ENCODE measurements at regions of chr17 and their contacts with region 1.

Region 1: GRCh38 chr17:32486111-32486700 is 587 bp upstream of the CDK5R1 start:
- DNase-seq: no peak
- ATAC-seq: peak; percentile 81
- H3K4me3 Mint-ChIP-seq: peak overlapping the region; percentile 70
- H3K27ac Mint-ChIP-seq: peak overlapping the region; percentile 46
- H3K4me1 Mint-ChIP-seq: peaks cover 47% of the 10 kb centered on the region
- H3K27me3 Mint-ChIP-seq: no peaks in the 10 kb centered on the region
- CTCF ChIP-seq: no peak

Region 2: DNA sequence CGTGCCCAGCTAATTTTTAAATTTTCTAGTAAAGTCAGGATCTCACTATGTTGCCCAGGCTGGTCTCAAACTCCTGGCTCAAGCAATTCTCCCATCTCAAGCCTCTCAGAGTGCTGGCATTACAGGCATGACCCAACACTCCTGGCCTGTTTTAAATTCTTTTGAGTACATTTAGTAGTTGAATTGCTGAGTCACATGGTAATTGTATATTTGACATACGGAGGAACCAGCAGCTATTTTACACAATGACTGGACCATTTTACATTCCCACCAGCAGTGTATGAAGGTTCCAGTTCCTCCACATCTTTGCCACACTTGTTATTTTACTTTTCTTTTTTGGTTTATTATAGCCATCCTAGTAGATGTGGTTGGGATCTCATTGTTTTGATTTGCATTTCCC is 300.3 kb before region 1 on chr17:
- CTCF ChIA-PET with region 1: no interaction called
- POLR2A ChIA-PET with region 1: no interaction called
- intact Hi-C with region 1: no loop called
- DNase-seq: no peak
- ATAC-seq: no peak
- H3K4me3 Mint-ChIP-seq: no peak overlapping the region
- H3K27ac Mint-ChIP-seq: no peak overlapping the region
- H3K4me1 Mint-ChIP-seq: no peaks in the 10 kb centered on the region
- H3K27me3 Mint-ChIP-seq: no peaks in the 10 kb centered on the region
- CTCF ChIP-seq: no peak

Region 3: GRCh38 chr17:32265192-32265923 is 220.8 kb before region 1 on chr17 and contains the start of gene RHBDL3:
- CTCF ChIA-PET with region 1: no interaction called
- POLR2A ChIA-PET with region 1: no interaction called
- intact Hi-C with region 1: no loop called
- DNase-seq: peak; percentile 29
- ATAC-seq: peak; percentile 51
- H3K4me3 Mint-ChIP-seq: peak within 1 kb of the TSS; percentile 80
- H3K27ac Mint-ChIP-seq: no peak within 1 kb of the TSS
- H3K4me1 Mint-ChIP-seq: peaks cover 17% of the 10 kb centered on the region
- H3K27me3 Mint-ChIP-seq: peaks cover 54% of the 10 kb centered on the region
- CTCF ChIP-seq: no peak
- total RNA-seq, gene RHBDL3: 0.10 and 0.20 TPM in 2 replicates

Region 4: DNA sequence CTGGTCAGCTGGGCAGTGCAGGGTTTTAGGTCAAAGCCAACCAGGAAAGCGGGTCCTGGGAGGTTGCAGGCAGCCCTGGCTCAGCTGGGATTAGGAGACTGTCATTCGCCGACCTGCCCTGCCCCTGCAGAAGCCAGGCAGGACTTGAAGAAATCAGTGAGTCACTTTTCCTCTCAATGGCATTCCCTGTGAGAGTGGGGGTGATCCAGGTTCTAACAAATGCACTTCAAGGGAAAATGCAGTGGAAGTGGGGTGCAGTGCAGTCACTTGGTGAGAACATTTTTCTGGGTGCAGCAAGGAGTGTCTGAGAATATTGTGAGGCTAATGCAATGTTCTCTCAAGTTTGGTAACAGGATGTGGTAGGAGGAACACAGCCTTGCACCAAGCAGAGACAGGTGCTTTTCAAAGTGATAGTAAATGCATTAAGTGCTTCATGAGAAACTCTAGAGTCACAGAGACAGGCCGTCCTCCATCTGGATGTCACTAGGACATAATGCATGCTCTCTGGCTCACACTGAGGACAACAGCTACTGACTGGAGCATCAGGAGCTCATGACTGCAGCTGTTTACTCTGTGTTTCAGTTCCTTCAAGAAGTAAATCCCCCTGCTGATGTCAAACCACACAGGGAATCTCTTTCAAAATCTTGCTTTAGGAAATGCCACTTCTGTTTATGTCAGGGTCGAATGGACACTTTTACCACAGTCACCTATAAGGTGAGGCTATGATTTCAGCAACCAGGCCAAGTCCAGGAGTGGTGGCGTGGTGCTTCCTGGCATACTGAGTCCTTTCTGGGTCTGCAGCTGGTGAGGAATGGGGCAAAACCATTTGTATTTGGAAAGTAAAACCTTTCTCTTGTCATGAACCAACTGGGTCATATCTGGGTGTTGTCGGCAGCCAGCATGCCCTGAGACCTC is 17.3 kb after region 1 on chr17:
- CTCF ChIA-PET with region 1: interaction called, 4 read pairs
- POLR2A ChIA-PET with region 1: interaction called, 14 read pairs
- intact Hi-C with region 1: loop called (anchors 1 kb)
- DNase-seq: no peak
- ATAC-seq: peak; percentile 89
- H3K4me3 Mint-ChIP-seq: peak overlapping the region; percentile 68
- H3K27ac Mint-ChIP-seq: peak overlapping the region; percentile 92
- H3K4me1 Mint-ChIP-seq: peaks cover 53% of the 10 kb centered on the region
- H3K27me3 Mint-ChIP-seq: no peaks in the 10 kb centered on the region
- CTCF ChIP-seq: no peak

Region 5: DNA sequence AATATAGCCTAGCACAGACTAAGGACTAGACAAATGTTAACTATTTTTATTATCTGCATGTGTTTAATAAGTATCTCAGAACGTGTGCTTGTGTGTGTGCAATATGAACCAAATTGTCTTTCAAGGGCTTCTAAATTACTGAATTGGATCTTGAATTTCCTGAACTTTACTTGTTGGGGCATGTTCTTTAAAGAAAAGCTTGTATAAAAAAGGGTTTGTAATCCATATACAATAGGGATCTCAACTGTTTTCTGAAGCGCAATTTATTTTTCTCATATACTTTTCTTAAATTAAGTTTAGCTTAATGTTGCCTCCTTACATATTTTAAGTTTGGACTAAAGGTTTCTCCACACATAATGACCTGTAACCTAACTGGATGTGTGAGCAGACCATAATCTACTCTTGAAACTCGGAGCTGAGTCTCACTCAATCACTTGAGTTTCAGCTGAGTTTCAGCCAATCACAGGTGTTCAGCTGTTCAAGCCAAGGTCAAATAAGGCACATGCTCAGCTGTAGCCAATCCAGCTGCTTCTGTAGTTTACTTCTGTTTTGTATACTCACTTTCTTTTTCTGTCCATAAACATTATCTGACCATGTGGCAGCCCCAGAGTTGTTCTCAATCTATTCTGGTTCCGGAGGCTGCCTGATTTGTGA is 72.9 kb after region 1 on chr17:
- CTCF ChIA-PET with region 1: interaction called, 4 read pairs
- POLR2A ChIA-PET with region 1: interaction called, 5 read pairs
- intact Hi-C with region 1: loop called (anchors 2 kb)
- DNase-seq: no peak
- ATAC-seq: peak; percentile 64
- H3K4me3 Mint-ChIP-seq: peak overlapping the region; percentile 48
- H3K27ac Mint-ChIP-seq: peak overlapping the region; percentile 86
- H3K4me1 Mint-ChIP-seq: peaks cover 38% of the 10 kb centered on the region
- H3K27me3 Mint-ChIP-seq: no peaks in the 10 kb centered on the region
- CTCF ChIP-seq: no peak

Region 6: DNA sequence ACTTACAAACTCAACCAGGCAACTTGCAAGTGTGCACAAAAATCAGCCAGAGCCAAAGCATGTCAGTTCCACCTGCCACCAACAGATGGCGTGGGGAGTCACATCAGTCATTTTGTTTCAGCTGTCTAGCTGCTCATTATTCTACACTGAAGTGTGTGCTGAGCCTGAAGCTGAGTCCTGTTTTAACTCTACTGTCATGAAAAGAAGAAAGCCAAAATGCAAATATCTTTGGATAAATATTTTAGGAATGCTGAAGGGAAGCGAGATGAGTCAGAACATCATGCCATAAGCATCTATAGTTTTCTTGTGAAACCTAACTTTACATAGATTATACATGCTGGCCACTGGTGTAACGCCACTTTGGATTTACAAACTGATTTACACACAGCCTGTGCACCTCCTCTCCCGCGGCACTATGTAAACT is 173.2 kb after region 1 on chr17:
- CTCF ChIA-PET with region 1: interaction called, 7 read pairs
- POLR2A ChIA-PET with region 1: no interaction called
- intact Hi-C with region 1: loop called (anchors 1 kb)
- DNase-seq: peak; percentile 43
- ATAC-seq: peak; percentile 64
- H3K4me3 Mint-ChIP-seq: no peak overlapping the region
- H3K27ac Mint-ChIP-seq: no peak overlapping the region
- H3K4me1 Mint-ChIP-seq: no peaks in the 10 kb centered on the region
- H3K27me3 Mint-ChIP-seq: no peaks in the 10 kb centered on the region
- CTCF ChIP-seq: no peak

Region 7: DNA sequence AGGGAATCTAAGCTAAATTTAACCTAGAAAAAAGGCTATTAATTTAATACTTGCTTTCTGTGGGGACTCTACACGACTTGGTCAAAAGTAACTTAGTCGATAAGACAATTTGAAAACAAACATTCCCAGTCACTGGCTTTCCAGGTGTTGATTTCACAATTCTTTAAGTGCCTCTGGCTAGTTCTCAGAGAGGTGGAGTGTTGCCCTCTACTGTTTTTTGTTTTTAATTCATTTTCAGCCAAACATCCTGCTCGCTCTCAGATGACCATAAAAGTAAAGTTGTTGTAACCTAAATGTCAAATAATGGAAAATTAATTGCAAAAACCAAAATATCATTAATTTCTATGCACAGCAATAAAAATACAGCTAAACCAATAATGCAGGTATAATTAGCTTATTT is 283.6 kb after region 1 on chr17:
- CTCF ChIA-PET with region 1: no interaction called
- POLR2A ChIA-PET with region 1: no interaction called
- intact Hi-C with region 1: loop called (anchors 5 kb)
- DNase-seq: no peak
- ATAC-seq: no peak
- H3K4me3 Mint-ChIP-seq: no peak overlapping the region
- H3K27ac Mint-ChIP-seq: no peak overlapping the region
- H3K4me1 Mint-ChIP-seq: peaks cover 5% of the 10 kb centered on the region
- H3K27me3 Mint-ChIP-seq: no peaks in the 10 kb centered on the region
- CTCF ChIP-seq: no peak

Region 8: DNA sequence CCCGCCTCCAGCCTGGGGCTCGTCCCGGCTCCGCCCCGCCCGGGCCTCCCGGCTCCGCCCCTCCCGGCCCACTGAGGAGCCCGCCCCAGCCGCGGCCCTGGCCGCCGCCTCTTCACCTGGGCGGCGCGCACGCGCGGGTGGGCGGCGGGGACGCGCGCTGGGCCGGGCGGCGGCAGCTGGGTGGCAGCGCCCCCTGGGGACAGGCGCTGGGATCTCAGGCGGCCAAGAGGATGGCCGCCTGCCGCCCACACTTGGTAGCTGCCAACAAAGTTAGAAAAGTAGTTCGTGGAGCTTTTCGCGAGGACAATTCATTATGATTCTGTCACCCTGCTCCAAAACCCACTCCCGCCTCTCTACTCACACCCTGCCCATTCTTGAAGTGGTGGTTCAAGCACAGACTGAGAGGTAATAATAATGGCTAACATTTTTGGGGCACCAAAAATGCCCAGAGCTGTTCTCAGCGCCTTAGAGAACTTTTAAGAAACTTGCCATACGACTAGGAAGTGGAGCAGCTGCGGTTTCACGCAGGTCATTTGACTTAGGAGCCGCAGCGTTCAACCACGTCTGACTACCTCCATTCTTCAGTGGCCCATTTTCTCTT is 391.1 kb after region 1 on chr17:
- CTCF ChIA-PET with region 1: interaction called, 4 read pairs
- POLR2A ChIA-PET with region 1: interaction called, 7 read pairs
- intact Hi-C with region 1: loop called (anchors 2 kb)
- DNase-seq: peak; percentile 97
- ATAC-seq: peak; percentile 94
- H3K4me3 Mint-ChIP-seq: peak overlapping the region; percentile 84
- H3K27ac Mint-ChIP-seq: peak overlapping the region; percentile 93
- H3K4me1 Mint-ChIP-seq: peaks cover 13% of the 10 kb centered on the region
- H3K27me3 Mint-ChIP-seq: no peaks in the 10 kb centered on the region
- CTCF ChIP-seq: no peak